ENCODE measurements at regions of chr19 and their contacts with region 1.

Region 1: DNA sequence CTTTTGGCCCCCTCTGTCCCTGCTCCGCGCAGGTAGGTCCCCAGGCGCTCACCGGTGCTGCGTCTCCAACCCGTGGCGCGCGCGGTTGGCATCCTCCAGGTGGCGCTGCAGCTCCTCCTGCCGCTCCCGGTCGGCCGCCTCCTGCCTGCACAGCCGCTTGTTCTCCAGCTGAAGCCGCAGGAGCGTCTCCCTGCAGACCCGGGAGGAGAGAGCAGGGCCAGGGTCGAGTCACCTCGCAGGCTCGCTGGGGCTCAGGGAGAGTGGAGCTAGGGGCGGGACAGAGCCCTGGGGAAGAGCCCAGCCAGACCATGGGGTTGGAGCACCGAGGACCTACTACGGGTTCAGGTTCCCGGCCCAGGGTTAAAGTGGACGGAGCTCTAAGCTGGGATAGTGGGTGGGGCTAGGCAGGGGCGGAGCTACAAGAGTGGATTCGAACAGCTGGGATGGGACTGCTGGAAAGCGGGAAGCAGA is 9.3 kb downstream of the HOOK2 start:
- DNase-seq: peak; percentile 93 to 95
- H3K4me3 ChIP-seq: peak overlapping the region; percentile 30 to 53 (median 42)
- H3K27ac ChIP-seq: peak overlapping the region in 4 of 5 donors; percentile 44 to 78 (median 66)
- H3K4me1 ChIP-seq: peaks cover 0 to 18% (median 15%) of the 10 kb centered on the region in 4 donors
- H3K27me3 ChIP-seq: no peaks in the 10 kb centered on the region
- CTCF ChIP-seq: peak in 6 of 7 experiments; percentile 32 to 94 (median 80)
- EP300 ChIP-seq: no peak
- POLR2A ChIP-seq: no peak

Region 2: GRCh38 chr19:12801466-12802266 is 35.6 kb after region 1 on chr19 and contains the starts of genes PRDX2 and THSD8:
- intact Hi-C with region 1: loop called (anchors 5 kb)
- DNase-seq: peak; percentile 87 to 95
- H3K4me3 ChIP-seq: peak within 1 kb of the TSS; percentile 80 to 86 (median 80)
- H3K27ac ChIP-seq: peak within 1 kb of the TSS; percentile 76 to 86 (median 83)
- H3K4me1 ChIP-seq: peaks cover 13 to 50% (median 36%) of the 10 kb centered on the region in 4 donors
- H3K27me3 ChIP-seq: peaks cover 0 to 6% (median 0%) of the 10 kb centered on the region in 3 donors
- CTCF ChIP-seq: no peak
- EP300 ChIP-seq: no peak
- POLR2A ChIP-seq: peak in 2 of 4 donors; percentile 36 to 84
- total RNA-seq, gene PRDX2: 118 to 284 (median 129) TPM
- total RNA-seq, gene THSD8: not detected

Region 3: DNA sequence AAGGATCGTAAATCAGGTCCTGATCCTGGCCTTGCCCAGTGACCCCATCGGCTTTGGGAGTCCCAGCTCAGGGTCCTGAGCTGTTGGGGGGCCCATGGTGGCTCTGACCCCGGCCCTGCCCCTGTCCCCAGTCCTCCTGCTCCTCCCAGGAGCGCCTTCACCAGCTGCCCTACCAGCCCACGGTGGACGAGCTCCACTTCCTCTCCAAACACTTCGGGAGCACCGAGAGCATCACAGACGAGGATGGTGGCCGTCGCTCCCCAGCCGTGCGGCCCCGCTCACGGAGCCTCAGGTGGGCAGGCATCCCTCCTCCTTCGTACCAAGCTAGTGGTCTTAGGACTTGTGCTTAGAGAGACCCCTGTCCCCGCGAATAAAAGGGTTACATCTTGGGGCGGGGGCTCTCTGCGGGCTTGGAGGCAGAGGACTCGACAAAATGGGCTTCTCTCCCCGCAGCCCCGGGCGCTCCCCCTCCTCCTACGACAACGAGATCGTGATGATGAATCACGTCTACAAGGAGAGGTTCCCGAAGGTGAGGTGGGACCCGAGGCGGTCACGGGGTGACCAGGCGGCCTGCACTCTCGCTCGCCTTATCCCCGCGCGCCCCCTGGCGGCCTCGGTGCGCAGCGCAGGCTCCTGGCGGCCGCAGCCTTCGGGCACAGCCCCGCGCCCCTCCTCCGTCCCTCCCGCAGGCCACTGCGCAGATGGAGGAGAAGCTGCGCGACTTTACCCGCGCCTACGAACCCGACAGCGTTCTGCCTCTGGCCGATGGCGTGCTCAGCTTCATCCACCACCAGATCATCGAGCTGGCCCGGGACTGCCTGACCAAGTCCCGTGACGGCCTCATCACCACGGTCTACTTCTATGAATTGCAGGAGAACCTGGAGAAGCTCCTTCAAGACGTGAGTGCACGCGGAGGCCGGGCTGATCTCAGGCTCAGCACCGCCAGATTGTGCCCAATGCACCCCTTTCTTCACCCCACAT is 81.4 kb after region 1 on chr19:
- intact Hi-C with region 1: loop called (anchors 5 kb)
- DNase-seq: peak; percentile 93 to 95
- H3K4me3 ChIP-seq: peak overlapping the region; percentile 12 to 39 (median 18)
- H3K27ac ChIP-seq: no peak overlapping the region
- H3K4me1 ChIP-seq: peaks cover 9 to 11% (median 10%) of the 10 kb centered on the region in 4 donors
- H3K27me3 ChIP-seq: peaks cover 5 to 60% (median 14%) of the 10 kb centered on the region in 3 donors
- CTCF ChIP-seq: peak in 6 of 7 experiments; percentile 30 to 100 (median 99)
- EP300 ChIP-seq: no peak
- POLR2A ChIP-seq: no peak